K562 (cell line): ENCODE measurements at regions of chr21 and their contacts with region 1.

Region 1: DNA sequence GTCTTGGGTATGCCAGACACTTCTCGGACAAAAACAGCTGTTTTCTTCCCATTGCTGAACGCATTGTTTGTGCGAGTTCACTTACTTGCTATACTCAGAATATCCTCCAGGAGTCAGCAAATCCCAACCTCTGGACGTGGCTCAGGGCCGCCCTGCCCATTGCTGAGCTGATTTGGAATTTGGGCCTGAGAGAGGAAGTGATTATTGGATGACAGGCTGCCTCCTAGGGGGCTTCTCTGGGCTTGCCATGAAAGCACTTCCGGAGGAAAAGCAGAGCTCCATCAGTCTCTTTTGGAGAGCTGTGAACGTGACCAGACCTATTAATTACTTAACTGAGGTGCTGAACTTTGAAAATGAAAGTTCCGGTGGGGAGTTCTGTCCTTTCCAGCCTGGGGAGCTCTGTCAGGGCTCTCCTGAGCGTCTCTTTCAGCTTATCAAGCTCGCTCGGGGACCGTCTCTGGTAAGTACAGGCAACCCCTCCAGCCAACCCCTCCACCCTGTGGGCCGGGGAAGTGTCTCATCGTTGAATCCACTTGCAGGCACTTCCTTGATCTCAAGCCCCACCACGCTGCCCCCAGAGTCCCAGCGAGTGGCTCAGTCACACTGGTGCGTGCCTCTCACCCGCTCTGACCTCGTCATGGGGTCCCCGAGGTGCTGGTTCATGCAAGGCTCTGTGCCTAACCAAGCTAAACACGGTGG is 76.9 kb downstream of the CLIC6 start:
- DNase-seq: peak; percentile 78 to 89 (median 86)
- ATAC-seq: peak; percentile 99
- H3K4me3 ChIP-seq: no peak overlapping the region
- H3K27ac ChIP-seq: no peak overlapping the region
- H3K4me1 ChIP-seq: peaks cover 4 to 6% of the 10 kb centered on the region in 2 experiments; a peak in 3 of 5 replicates
- H3K27me3 ChIP-seq: peaks cover 9 to 36% of the 10 kb centered on the region in 2 experiments
- CTCF ChIP-seq: peak; percentile 98 to 99 (median 98)
- EP300 ChIP-seq: peak; percentile 46
- POLR2A ChIP-seq: no peak
- RAD21 ChIP-seq: peak; percentile 99

Region 2: GRCh38 chr21:34679051-34679450 is 66.7 kb before region 1 on chr21:
- CTCF ChIA-PET with region 1: no interaction called
- POLR2A ChIA-PET with region 1: no interaction called
- in situ Hi-C with region 1: no loop called
- intact Hi-C with region 1: no loop called
- DNase-seq: no peak
- ATAC-seq: no peak
- H3K4me3 ChIP-seq: no peak overlapping the region
- H3K27ac ChIP-seq: no peak overlapping the region
- H3K4me1 ChIP-seq: no peaks in the 10 kb centered on the region
- H3K27me3 ChIP-seq: peaks cover 10 to 16% of the 10 kb centered on the region in 2 experiments; a peak in 4 of 5 replicates
- CTCF ChIP-seq: no peak
- EP300 ChIP-seq: no peak
- POLR2A ChIP-seq: no peak
- RAD21 ChIP-seq: no peak

Region 3: DNA sequence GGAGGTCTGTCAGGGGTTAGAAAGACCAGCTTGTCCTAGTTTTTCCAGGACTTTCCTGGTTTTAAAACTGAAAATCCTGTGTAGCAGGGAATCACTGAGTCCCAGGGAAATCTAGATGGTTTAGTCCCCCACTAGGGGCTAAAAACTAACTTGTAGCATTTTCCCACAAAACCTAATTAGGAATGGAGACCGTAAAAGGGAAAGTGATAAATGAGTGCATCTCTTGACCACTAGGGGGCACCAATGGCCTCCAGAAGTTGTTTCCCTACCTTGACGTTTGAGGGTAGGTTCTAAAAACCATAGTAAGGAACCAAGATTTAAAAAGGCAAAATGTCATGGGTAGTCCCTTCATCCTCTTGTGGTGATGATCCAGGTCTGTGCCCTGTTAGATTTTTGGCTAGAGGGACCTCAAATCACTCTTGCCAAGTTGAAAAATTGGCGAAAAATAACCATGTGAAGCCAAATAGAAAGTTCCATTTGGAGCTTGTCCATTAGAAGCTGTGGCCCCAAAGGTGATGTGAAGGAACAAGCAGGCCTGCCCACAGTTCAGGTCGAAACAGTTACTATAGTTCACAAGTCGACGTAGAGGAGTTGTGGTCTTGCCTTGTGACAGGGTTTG is 52.4 kb before region 1 on chr21:
- CTCF ChIA-PET with region 1: no interaction called
- POLR2A ChIA-PET with region 1: no interaction called
- in situ Hi-C with region 1: no loop called
- intact Hi-C with region 1: loop called (anchors 5 kb)
- DNase-seq: peak; percentile 74 to 77 (median 75)
- ATAC-seq: peak; percentile 87
- H3K4me3 ChIP-seq: no peak overlapping the region
- H3K27ac ChIP-seq: no peak overlapping the region
- H3K4me1 ChIP-seq: no peaks in the 10 kb centered on the region; a peak in 1 of 5 replicates
- H3K27me3 ChIP-seq: peaks cover 19 to 21% of the 10 kb centered on the region in 2 experiments
- CTCF ChIP-seq: peak; percentile 77 to 93 (median 88)
- EP300 ChIP-seq: no peak
- POLR2A ChIP-seq: no peak
- RAD21 ChIP-seq: peak; percentile 88 to 94

Region 4: DNA sequence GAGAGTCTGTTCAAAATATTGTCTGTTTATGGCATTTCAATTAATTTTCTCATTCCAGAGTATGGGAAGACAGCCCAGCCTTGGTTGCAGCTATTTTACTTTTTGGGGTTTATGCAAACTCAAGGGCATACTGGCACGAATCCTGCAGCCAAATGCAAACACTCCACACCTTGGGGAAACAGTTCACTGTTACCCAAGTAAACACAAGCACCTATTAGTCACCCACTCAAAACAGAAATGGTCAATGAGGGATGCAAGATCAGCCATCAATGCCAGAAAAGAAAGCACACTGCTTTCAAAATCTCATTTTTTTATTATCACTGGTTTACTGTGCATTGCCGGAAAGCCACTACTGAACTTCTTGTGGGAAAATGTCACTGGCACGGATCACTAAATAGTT is 132.8 kb after region 1 on chr21:
- CTCF ChIA-PET with region 1: no interaction called
- POLR2A ChIA-PET with region 1: no interaction called
- in situ Hi-C with region 1: no loop called
- intact Hi-C with region 1: no loop called
- DNase-seq: no peak
- ATAC-seq: no peak
- H3K4me3 ChIP-seq: no peak overlapping the region
- H3K27ac ChIP-seq: no peak overlapping the region
- H3K4me1 ChIP-seq: peaks cover 0 to 23% of the 10 kb centered on the region in 2 experiments; a peak in 3 of 5 replicates
- H3K27me3 ChIP-seq: no peaks in the 10 kb centered on the region
- CTCF ChIP-seq: no peak
- EP300 ChIP-seq: no peak
- POLR2A ChIP-seq: no peak
- RAD21 ChIP-seq: no peak

Region 5: DNA sequence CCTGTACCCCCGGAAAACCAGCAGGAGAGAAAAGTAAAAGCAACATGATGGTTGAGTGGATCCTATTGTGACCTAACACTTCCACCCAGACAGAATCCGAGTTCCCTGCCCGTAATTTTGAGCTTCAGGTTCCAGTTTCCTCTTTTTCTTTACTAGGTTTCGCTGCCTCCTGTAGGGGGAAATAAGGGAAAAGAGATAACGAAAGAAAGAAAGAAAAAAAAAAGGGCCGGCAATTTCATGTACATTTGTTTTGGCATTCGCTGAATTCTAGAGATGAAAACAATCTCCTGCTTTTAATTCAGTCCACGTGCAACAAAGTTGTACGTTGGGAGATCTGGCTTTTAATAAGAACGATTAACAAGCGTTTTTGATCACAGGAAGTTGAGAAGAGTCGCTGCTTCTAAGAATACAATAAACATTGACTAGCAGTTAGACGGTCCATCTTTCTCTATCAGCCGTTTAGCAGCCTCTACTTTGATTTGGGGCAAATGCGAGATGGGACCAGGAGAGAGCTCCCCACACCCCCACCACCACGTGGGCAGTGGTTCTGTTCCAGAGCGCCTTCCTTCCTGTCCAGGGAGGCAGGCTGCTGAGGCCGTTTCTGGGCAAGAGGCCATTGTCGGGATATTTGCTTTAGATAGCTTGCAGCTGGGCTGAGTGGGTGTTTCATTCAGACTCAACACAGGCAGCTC is 459.3 kb after region 1 on chr21:
- CTCF ChIA-PET with region 1: no interaction called
- POLR2A ChIA-PET with region 1: no interaction called
- in situ Hi-C with region 1: no loop called
- intact Hi-C with region 1: loop called (anchors 10 kb)
- DNase-seq: peak; percentile 69 to 85 (median 73)
- ATAC-seq: peak; percentile 75
- H3K4me3 ChIP-seq: peak overlapping the region; percentile 18
- H3K27ac ChIP-seq: peak overlapping the region; percentile 85
- H3K4me1 ChIP-seq: peaks cover 24 to 48% of the 10 kb centered on the region in 2 experiments
- H3K27me3 ChIP-seq: no peaks in the 10 kb centered on the region
- CTCF ChIP-seq: peak; percentile 26 to 52 (median 42); a peak in 4 of 6 replicates
- EP300 ChIP-seq: no peak; the same call in 1 of the 2 replicates
- POLR2A ChIP-seq: no peak; the same call in 1 of the 2 replicates
- RAD21 ChIP-seq: peak; percentile 56 to 62

Region 6: DNA sequence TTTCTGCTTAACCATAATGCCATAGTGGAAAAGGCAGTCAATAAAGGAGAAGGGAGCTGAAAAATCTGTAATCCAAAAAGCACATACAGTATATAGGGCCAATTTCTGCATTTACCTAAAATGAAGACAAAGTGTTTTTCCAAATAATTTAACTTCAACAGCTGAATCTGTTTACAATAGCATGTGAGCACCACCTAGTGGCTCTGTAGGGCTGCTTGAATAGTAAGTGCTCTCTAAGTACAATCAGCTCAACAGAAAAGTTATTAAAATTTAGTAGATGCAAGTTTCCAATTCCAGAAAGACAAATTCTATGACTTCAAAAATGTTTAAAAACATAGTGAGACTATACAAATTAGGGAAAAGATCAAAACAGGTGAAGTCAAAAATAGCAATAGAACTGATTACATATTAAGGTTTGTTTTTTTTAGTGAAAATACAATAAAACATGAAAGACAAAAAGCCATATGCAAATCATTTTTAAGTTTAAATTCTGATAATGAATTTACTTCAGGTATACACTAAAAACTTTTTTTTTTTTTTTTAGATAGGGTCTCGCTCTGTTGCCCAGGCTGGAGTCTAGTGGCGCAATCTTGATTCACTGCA is 1094.6 kb after region 1 on chr21:
- CTCF ChIA-PET with region 1: interaction called, 12 read pairs
- POLR2A ChIA-PET with region 1: interaction called, 3 read pairs
- in situ Hi-C with region 1: loop called (anchors 10 kb)
- intact Hi-C with region 1: loop called (anchors 1 kb)
- DNase-seq: peak; percentile 43 to 78 (median 54)
- ATAC-seq: peak; percentile 82
- H3K4me3 ChIP-seq: no peak overlapping the region
- H3K27ac ChIP-seq: no peak overlapping the region
- H3K4me1 ChIP-seq: no peaks in the 10 kb centered on the region
- H3K27me3 ChIP-seq: peaks cover 0 to 11% of the 10 kb centered on the region in 2 experiments; a peak in 3 of 5 replicates
- CTCF ChIP-seq: peak; percentile 70 to 87 (median 75); a peak in 5 of 6 replicates
- EP300 ChIP-seq: no peak
- POLR2A ChIP-seq: no peak
- RAD21 ChIP-seq: peak; percentile 82 to 96

Region 7: DNA sequence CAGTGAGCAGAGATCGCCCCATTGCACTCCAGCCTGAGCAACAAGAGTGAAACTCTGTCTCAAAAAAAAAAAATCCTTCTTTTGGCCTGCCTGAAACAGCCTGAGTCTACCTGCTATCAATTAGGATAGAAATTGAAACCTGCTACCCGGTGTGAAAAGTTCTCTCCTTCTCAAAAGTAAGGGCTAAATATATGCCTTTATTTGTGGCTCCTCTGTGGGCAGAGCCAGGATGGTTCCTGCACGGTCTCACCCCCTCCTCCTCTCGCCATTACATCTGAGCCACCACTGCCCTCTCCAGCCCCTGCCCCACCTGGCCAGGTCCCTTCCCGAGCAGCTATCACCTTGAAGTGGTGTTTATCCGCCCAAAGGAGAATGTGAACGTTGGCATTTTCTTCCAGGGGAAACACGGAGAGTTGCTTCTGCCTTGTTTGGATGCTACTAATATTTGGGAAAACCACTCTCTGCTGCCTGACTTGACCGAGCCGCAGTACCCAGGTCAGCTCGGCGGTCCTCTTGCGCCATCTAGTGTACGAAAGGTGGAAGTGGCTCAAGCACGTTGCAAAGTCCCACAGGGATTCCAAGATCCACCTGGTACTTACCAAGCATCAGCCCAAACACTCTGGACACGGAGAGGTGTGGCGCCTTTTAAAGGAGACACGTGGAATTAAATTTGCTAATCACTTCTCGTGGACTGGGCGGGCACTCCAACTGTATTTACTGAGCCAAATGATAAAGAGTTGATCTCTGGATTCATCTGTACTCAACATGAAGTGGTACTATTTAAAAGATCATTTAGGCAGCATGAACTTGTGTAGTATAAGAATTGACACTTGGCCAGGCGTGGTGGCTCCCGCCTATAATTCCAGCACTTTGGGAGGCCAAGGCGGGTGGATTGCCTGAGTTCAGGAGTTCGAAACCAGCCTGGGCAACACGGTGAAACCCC is 1282.7 kb after region 1 on chr21:
- CTCF ChIA-PET with region 1: interaction called, 14 read pairs
- POLR2A ChIA-PET with region 1: interaction called, 3 read pairs
- in situ Hi-C with region 1: no loop called
- intact Hi-C with region 1: loop called (anchors 1 kb)
- DNase-seq: peak; percentile 83 to 88 (median 86)
- ATAC-seq: peak; percentile 95
- H3K4me3 ChIP-seq: no peak overlapping the region
- H3K27ac ChIP-seq: no peak overlapping the region
- H3K4me1 ChIP-seq: peaks cover 9 to 12% of the 10 kb centered on the region in 2 experiments; a peak in 3 of 5 replicates
- H3K27me3 ChIP-seq: peaks cover 14 to 21% of the 10 kb centered on the region in 2 experiments; a peak in 4 of 5 replicates
- CTCF ChIP-seq: peak; percentile 93 to 99 (median 98)
- EP300 ChIP-seq: no peak
- POLR2A ChIP-seq: no peak
- RAD21 ChIP-seq: peak; percentile 95 to 96